Activated CD4-positive, alpha-beta memory T cell treated with anti-CD3 and anti-CD28 coated beads for 36 hours (primary cell): ENCODE measurements at regions of chr15 and their contacts with region 1.

Region 1: DNA sequence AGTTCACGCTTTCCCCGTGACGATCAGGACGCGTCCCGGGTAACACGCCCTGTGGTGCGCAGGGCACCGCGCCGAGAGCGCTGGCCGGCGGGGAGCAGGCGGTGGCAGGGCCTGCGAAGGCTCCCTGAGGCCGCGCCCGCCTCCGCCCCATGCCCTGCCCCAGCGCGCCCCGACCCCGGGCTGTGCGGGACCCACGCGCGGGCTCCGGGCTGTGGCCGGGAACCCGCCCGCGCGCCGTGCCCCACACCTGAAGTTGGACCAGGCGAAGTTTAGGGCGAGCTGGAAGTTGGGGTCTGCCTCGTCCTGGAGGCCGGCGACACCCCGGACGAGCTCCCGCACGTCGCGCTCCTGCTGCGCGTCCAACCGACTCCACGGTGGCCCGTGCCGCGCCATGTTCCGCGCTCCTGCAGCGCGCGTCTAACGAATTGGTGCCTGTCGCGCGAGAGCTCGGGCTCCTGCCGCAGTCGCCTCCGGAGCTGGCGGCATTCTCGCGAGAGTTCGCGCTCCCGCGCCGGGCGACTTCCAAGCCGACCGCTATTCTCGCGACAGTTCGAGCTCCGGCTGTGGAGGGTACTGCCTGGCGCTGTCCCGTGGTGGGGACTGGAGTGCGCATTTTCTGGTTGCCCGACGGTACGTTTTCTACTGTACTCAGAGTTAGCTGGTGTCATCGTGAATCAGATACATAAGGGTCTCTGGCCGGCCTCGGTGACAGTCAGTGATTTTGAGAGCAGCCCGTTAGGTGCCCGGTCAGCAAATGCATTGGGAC is at the start of gene TUBGCP5:
- DNase-seq: peak; percentile 99
- H3K4me3 Mint-ChIP-seq: peak within 1 kb of the TSS; percentile 93
- H3K27ac Mint-ChIP-seq: peak within 1 kb of the TSS; percentile 79
- H3K4me1 Mint-ChIP-seq: peaks cover 25% of the 10 kb centered on the region
- H3K27me3 Mint-ChIP-seq: no peaks in the 10 kb centered on the region
- total RNA-seq, gene TUBGCP5: 13.7 to 15.3 TPM

Region 2: DNA sequence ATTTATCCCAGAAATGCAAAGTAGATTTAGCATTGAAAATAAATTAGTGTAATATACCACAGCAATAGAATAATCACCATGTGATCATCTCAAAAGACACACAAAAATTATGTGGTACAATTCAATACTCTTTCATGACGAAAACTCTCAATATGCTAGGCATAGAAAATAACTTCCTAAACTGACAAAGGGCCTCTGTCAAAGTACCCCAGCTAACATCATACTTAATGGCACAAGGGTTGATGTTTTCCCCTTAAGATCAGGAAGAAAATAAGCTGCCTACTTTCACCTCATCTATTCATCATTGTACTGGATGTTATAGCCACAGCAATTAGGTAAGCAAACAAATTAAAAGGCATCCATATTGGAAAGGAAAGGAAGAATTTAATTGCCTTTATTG is 223.6 kb before region 1 on chr15:
- CTCF ChIA-PET with region 1: no interaction called
- POLR2A ChIA-PET with region 1: no interaction called
- intact Hi-C with region 1: no loop called
- DNase-seq: no peak
- H3K4me3 Mint-ChIP-seq: no peak overlapping the region
- H3K27ac Mint-ChIP-seq: no peak overlapping the region
- H3K4me1 Mint-ChIP-seq: peaks cover 5% of the 10 kb centered on the region
- H3K27me3 Mint-ChIP-seq: no peaks in the 10 kb centered on the region

Region 3: DNA sequence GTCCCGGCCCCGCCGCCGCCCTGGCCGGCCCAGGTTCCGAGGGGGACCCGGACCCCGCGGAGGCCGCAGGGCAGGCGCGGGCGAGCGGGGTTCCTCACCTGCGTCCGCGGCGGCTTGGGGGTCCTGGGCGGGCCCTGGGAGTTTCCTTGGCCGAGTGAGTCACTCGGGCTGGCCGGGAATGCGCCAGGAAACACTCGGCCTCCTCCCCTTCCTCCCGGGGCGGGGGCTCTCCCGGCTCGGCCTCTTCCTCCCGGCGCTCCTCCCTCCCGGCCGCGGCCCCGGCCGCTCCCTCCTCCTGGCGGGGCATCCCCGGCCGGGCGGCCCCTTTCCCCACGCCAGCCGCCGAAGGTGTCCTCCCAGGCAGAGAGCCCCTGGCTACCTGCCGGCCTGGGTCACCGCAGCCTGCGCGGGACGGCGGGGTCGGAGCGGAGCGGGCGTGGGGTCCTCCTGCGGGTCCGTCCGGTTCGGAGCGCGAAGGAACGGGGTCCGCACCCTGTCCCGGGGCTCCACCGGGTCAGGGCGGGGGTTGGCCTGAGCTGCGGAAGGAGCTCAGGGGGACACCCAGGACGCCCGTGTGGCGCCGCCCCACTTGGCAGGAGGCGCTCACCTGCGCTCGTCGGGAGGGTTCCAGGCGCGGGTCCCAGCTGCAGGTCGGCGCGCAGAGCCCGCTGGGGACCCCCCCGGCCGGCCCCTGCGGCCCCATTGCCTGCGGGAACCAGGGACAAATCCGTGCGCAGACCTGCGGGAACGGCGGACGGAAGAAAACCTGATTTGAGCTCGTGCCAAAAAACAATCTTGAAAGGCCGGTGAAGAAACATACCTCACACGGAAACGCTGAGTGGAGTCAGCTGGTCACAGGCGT is 58.9 kb before region 1 on chr15 and contains the start of gene CYFIP1:
- CTCF ChIA-PET with region 1: interaction called, 5 read pairs
- POLR2A ChIA-PET with region 1: interaction called, 8 read pairs
- intact Hi-C with region 1: loop called (anchors 2 kb)
- DNase-seq: peak; percentile 55
- H3K4me3 Mint-ChIP-seq: peak within 1 kb of the TSS; percentile 85
- H3K27ac Mint-ChIP-seq: no peak within 1 kb of the TSS
- H3K4me1 Mint-ChIP-seq: peaks cover 11% of the 10 kb centered on the region
- H3K27me3 Mint-ChIP-seq: peaks cover 4% of the 10 kb centered on the region
- total RNA-seq, gene CYFIP1: 55.8 to 57.3 TPM

Region 4: DNA sequence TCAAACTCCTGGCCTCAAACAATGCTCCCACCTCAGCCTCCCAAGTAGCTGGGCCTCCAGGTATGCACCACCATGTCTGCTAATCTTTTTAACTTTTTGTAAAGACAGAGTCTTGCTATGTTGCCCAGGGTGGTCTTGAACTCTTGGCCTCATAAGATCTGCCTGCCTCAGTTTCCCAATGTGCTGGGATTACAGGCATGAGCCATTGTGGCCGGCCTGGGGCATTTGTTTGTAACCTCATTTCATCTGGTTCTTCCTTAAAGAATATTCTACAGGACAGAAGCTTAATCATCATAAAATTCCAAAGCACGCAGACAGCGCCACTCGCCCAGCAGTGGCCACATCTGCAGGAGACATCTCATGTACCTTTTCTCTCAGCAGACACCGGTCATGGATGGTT is 35.6 kb before region 1 on chr15:
- CTCF ChIA-PET with region 1: no interaction called
- POLR2A ChIA-PET with region 1: no interaction called
- intact Hi-C with region 1: no loop called
- DNase-seq: no peak
- H3K4me3 Mint-ChIP-seq: no peak overlapping the region
- H3K27ac Mint-ChIP-seq: no peak overlapping the region
- H3K4me1 Mint-ChIP-seq: no peaks in the 10 kb centered on the region
- H3K27me3 Mint-ChIP-seq: no peaks in the 10 kb centered on the region

Region 5: DNA sequence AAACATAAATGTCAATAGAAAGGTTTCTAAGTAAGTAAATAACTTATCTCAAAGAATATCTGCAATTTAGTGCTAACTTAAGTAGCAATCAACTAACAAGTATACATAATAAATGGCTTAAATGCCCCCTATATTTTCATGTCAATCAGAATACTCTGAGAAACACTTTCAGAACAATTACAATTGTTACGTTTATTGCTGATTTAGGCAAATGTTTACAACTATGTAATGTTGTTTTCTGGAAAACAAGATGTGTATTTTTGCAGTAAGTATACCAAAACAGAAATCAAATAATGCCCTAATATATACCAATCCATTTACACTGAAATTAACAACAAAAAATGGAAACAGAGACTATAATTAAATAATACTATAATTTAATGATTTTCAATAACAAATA is 13.1 kb before region 1 on chr15:
- CTCF ChIA-PET with region 1: interaction called, 19 read pairs
- POLR2A ChIA-PET with region 1: interaction called, 8 read pairs
- intact Hi-C with region 1: no loop called
- DNase-seq: no peak
- H3K4me3 Mint-ChIP-seq: no peak overlapping the region
- H3K27ac Mint-ChIP-seq: no peak overlapping the region
- H3K4me1 Mint-ChIP-seq: no peaks in the 10 kb centered on the region
- H3K27me3 Mint-ChIP-seq: no peaks in the 10 kb centered on the region

Region 6: DNA sequence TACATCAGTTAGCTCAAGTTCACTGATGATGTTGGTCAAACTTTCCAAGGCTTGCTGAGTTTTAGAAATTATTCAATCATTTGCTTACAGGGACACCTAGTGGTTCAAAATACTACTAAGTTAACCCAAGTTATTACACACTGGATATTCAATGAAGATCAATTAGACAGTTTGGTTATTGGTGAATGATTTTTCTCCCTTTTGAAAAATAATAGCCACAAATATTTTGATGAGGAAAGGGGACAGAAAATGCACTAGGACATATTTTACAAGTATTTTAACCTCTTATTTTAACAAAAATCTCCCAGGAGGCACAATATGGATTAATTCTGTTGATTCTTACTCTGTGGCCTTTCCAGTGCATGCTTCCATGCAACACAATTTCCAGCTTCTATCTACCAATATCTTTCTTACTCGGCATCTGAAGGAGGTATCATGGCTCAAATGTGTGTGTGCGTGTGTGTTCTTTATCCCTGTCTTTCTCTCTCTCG is 427.8 kb after region 1 on chr15:
- CTCF ChIA-PET with region 1: no interaction called
- POLR2A ChIA-PET with region 1: no interaction called
- intact Hi-C with region 1: loop called (anchors 5 kb)
- DNase-seq: no peak
- H3K4me3 Mint-ChIP-seq: no peak overlapping the region
- H3K27ac Mint-ChIP-seq: no peak overlapping the region
- H3K4me1 Mint-ChIP-seq: no peaks in the 10 kb centered on the region
- H3K27me3 Mint-ChIP-seq: peaks cover 5% of the 10 kb centered on the region